ENCODE measurements at regions of chr17 and their contacts with region 1.

Region 1: GRCh38 chr17:80477647-80478478 is 1.5 kb upstream of the NPTX1 start:
- DNase-seq: no peak
- H3K4me3 ChIP-seq: peak overlapping the region; percentile 49 to 59 (median 52)
- H3K27ac ChIP-seq: no peak overlapping the region
- H3K4me1 ChIP-seq: peaks cover 42 to 55% (median 52%) of the 10 kb centered on the region in 4 donors
- H3K27me3 ChIP-seq: peaks cover 22 to 100% (median 64%) of the 10 kb centered on the region in 4 donors
- CTCF ChIP-seq: peak; percentile 38 to 48 (median 40)
- EP300 ChIP-seq: no peak
- POLR2A ChIP-seq: no peak

Region 2: GRCh38 chr17:80328634-80329380 is 149.1 kb before region 1 on chr17:
- intact Hi-C with region 1: no loop called
- DNase-seq: no peak
- H3K4me3 ChIP-seq: no peak overlapping the region
- H3K27ac ChIP-seq: no peak overlapping the region
- H3K4me1 ChIP-seq: no peaks in the 10 kb centered on the region
- H3K27me3 ChIP-seq: no peaks in the 10 kb centered on the region
- CTCF ChIP-seq: no peak
- EP300 ChIP-seq: no peak
- POLR2A ChIP-seq: no peak

Region 3: GRCh38 chr17:80544655-80545498 is 67.0 kb after region 1 on chr17 and contains the start of gene RPTOR:
- intact Hi-C with region 1: loop called (anchors 10 kb)
- DNase-seq: peak; percentile 97
- H3K4me3 ChIP-seq: peak within 1 kb of the TSS; percentile 68 to 99 (median 92)
- H3K27ac ChIP-seq: peak within 1 kb of the TSS; percentile 74 to 88 (median 80)
- H3K4me1 ChIP-seq: peaks cover 19 to 43% (median 34%) of the 10 kb centered on the region in 4 donors
- H3K27me3 ChIP-seq: peaks cover 0 to 33% (median 0%) of the 10 kb centered on the region in 4 donors
- CTCF ChIP-seq: peak in 1 of 3 experiments; percentile 24
- EP300 ChIP-seq: no peak
- POLR2A ChIP-seq: no peak
- total RNA-seq, gene RPTOR: 34.1 to 65.8 (median 43.6) TPM

Measured in esophagus muscularis mucosa (tissue), 4 donors.